Activated CD4-positive, alpha-beta T cell treated with anti-CD3 and anti-CD28 coated beads, Interleukin-2, amount 10 ng/mL, durations not matched to agents 7 days and 5 days (primary cell): ENCODE measurements at regions of chr14 and their contacts with region 1.

Region 1: GRCh38 chr14:80987235-80988032 is 32.0 kb downstream of the TSHR start:
- DNase-seq: peak; percentile 79
- H3K4me3 Mint-ChIP-seq: no peak overlapping the region
- H3K27ac Mint-ChIP-seq: no peak overlapping the region
- H3K4me1 Mint-ChIP-seq: peaks cover 15% of the 10 kb centered on the region
- H3K27me3 Mint-ChIP-seq: peaks cover 6% of the 10 kb centered on the region

Region 2: DNA sequence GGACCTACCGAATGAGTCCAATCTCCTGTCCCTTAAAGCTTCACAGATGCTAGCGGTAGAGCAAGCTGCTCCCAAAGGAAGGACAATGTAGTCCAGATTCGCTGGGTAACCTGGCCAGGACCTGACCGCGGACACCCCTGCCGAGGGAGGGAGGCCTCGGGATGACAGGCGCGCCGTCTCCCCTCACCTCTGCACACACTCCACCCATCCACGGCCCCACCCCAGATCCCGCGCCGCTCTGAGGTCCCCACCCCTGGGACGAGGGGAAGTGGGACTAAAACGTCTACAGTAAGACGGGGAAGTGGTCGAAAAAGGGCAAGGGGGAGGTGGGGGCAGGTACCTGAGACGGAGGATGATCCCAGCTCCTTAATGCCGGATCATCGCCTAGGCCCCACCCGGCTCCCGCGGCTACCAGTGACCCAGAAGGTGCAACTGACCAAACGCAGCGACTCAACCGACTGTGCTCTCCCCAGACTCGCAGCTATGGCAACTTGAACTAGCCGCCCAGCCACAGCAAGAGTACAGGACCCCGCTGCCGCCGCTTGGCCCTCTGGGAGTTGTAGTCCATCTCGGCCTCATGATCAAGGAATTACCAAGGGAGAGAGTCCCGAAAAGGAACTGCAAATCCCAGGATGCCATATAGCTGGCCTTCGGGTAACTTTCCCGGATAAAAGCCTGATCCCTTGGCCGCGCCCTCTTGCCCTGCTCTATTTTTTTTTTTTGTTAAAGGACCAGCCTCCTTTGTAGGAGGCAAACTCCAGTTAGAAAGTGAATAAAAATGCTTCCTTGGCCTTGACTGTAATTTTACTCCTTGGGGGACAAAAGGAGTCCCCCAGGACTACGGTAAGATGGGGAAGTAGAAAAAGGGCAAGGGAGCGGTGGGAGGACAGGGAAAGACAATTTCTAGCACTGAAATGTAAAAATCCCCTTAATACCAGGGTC is 45.9 kb before region 1 on chr14 and contains the start of gene CEP128:
- CTCF ChIA-PET with region 1: interaction called, 15 read pairs
- POLR2A ChIA-PET with region 1: interaction called, 3 read pairs
- DNase-seq: peak; percentile 91
- H3K4me3 Mint-ChIP-seq: peak within 1 kb of the TSS; percentile 91
- H3K27ac Mint-ChIP-seq: peak within 1 kb of the TSS; percentile 87
- H3K4me1 Mint-ChIP-seq: peaks cover 37% of the 10 kb centered on the region
- H3K27me3 Mint-ChIP-seq: no peaks in the 10 kb centered on the region
- total RNA-seq, gene CEP128: 27.4 to 35.8 TPM

Region 3: DNA sequence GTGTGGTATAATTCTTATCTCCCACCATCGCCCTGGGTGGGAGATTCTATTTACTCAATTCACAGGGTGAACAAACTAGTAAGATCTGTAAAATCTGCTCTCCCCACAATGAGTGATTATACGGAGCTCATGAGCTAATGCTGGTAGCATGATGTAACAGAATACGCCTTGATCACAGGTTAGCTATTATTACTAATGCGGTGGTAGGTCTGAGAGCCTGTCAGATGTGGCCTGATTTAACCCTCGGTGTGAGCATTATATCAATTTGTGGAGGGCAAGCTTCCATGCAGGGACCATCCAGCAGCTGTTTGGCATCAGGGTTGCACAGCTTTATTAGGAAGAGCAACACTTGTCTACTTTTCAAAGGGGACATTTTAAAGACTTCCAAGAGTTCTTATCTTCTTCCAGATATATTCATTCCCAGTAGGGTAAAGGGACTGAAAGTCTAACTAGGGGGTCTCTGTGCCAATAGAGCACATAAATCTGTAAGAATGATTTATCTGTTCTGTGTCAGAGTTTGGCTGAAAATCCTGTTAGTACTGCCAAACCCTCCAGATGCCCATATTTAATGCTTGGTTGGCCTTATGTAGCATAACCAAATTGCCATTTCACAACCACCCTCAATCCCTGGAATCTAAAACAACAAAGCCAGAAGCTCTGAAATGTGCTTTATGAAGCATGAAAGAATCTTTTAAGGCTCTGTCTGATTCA is 13.3 kb before region 1 on chr14:
- CTCF ChIA-PET with region 1: interaction called, 24 read pairs
- POLR2A ChIA-PET with region 1: interaction called, 4 read pairs
- DNase-seq: no peak
- H3K4me3 Mint-ChIP-seq: no peak overlapping the region
- H3K27ac Mint-ChIP-seq: peak overlapping the region; percentile 67
- H3K4me1 Mint-ChIP-seq: peaks cover 40% of the 10 kb centered on the region
- H3K27me3 Mint-ChIP-seq: peaks cover 29% of the 10 kb centered on the region

Region 4: GRCh38 chr14:81348061-81348460 is 360.6 kb after region 1 on chr14:
- CTCF ChIA-PET with region 1: no interaction called
- POLR2A ChIA-PET with region 1: no interaction called
- DNase-seq: no peak
- H3K4me3 Mint-ChIP-seq: no peak overlapping the region
- H3K27ac Mint-ChIP-seq: no peak overlapping the region
- H3K4me1 Mint-ChIP-seq: no peaks in the 10 kb centered on the region
- H3K27me3 Mint-ChIP-seq: peaks cover 10% of the 10 kb centered on the region